ENCODE measurements at regions of chr6 and their contacts with region 1.

Region 1: GRCh38 chr6:27146706-27147505 is 100.6 kb upstream of the PRSS16 start:
- DNase-seq: peak; percentile 91
- H3K4me3 ChIP-seq: peak overlapping the region; percentile 66 to 94
- H3K27ac ChIP-seq: peak overlapping the region; percentile 94 to 96
- H3K4me1 ChIP-seq: peaks cover 0 to 8% of the 10 kb centered on the region in 2 experiments; a peak in 2 of 4 replicates
- H3K27me3 ChIP-seq: no peaks in the 10 kb centered on the region
- CTCF ChIP-seq: no peak
- EP300 ChIP-seq: peak in 1 of 2 experiments; percentile 32; a peak in 1 of 4 replicates
- RAD21 ChIP-seq: no peak

Region 2: GRCh38 chr6:26249957-26250697 is 896.8 kb before region 1 on chr6:
- CTCF ChIA-PET with region 1: no interaction called
- POLR2A ChIA-PET with region 1: interaction called, 11 read pairs
- DNase-seq: peak; percentile 58
- H3K4me3 ChIP-seq: peak overlapping the region; percentile 88 to 92
- H3K27ac ChIP-seq: peak overlapping the region; percentile 85 to 97
- H3K4me1 ChIP-seq: peaks cover 0 to 7% of the 10 kb centered on the region in 2 experiments; a peak in 3 of 4 replicates
- H3K27me3 ChIP-seq: no peaks in the 10 kb centered on the region
- CTCF ChIP-seq: peak; percentile 54
- EP300 ChIP-seq: 0 out of 4 replicates have a peak, but pooled peaks of 1 of the 2 experiments have one; percentile 12
- RAD21 ChIP-seq: no peak; the same call in 1 of the 2 replicates

Region 3: DNA sequence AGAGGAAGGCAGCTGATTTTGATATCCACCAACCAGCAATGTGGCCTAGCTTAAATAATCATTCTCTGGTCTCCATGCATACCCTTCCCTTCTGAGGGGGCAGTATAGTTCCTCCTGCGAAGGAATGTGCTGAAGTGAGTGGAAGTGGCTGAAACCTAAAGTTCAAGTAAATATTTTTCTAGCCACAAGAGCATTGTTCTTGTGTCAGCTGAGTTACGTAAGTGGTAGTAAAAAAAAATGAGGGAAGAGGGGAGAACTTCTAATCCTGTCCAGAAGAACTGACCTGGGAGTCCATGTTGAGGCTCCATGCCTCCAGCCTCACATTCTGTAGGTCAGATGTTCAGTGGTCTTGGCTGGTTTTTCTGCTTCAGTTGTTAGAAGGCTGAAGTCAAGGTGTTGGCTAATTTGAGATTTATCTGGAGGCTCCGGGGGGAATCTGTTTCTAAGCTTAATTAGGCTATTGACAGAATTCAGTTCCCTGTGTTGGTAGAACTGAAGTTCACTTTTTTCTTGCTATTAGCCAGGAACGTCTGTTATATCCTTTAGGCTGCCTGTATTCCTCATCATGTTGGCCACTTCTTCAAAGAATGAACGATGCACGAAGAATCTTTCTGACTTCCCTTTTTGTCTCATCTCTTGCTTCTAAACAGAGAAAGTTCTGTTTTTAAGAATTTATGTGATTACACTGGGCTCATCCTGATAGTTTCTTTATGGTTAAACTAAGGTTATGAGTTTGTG is 106.5 kb before region 1 on chr6:
- CTCF ChIA-PET with region 1: no interaction called
- POLR2A ChIA-PET with region 1: no interaction called
- DNase-seq: no peak
- H3K4me3 ChIP-seq: no peak overlapping the region
- H3K27ac ChIP-seq: no peak overlapping the region
- H3K4me1 ChIP-seq: no peaks in the 10 kb centered on the region
- H3K27me3 ChIP-seq: peaks cover 2% of the 10 kb centered on the region; the same call in 1 of the 2 replicates
- CTCF ChIP-seq: no peak
- EP300 ChIP-seq: no peak
- RAD21 ChIP-seq: no peak

Region 4: DNA sequence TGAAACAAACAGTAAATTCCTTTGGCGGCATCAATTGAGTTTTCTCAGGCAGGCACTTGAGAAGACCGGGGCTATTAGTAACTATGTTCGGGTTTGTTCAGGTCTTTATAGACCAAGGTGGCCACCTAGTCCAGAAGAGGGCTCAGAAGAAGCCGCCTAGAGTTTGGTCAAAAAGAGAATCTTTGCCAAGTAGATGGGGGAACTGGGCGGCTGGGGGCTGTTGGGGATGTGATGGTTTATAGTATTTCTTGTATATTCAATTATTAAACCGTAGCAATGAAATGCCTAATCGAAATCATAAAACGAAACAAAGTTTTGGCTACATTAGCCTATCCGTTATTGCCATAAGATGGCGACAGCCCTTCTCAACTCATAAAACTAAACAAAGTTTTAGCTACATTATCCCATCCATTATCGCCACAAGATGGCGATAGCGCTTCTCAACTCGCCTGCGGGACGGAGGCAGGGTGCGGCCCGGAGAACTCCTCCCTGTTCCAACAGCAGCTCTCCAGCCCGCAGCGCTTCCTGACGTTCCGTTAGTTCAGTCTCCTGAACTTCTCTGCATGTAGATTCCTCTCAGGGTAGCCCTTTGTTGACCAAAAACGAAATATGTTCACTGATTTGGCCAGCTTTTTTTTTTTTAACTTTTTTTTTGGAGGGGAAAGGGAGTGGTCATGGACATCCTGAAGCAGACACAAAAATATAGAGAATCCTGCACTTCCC is 19.9 kb before region 1 on chr6:
- CTCF ChIA-PET with region 1: interaction called, 10 read pairs
- POLR2A ChIA-PET with region 1: interaction called, 158 read pairs
- DNase-seq: peak; percentile 70
- H3K4me3 ChIP-seq: peak overlapping the region; percentile 48 to 57
- H3K27ac ChIP-seq: peak overlapping the region; percentile 65 to 82
- H3K4me1 ChIP-seq: peaks cover 5 to 10% of the 10 kb centered on the region in 2 experiments; a peak in 3 of 4 replicates
- H3K27me3 ChIP-seq: no peaks in the 10 kb centered on the region
- CTCF ChIP-seq: peak; percentile 89
- EP300 ChIP-seq: no peak
- RAD21 ChIP-seq: peak; percentile 78

Region 5: GRCh38 chr6:27157459-27158315 is 10.8 kb after region 1 on chr6:
- CTCF ChIA-PET with region 1: interaction called, 5 read pairs
- POLR2A ChIA-PET with region 1: interaction called, 19 read pairs
- DNase-seq: no peak
- H3K4me3 ChIP-seq: peak overlapping the region; percentile 53 to 57
- H3K27ac ChIP-seq: no peak overlapping the region
- H3K4me1 ChIP-seq: no peaks in the 10 kb centered on the region; a peak in 1 of 4 replicates
- H3K27me3 ChIP-seq: no peaks in the 10 kb centered on the region
- CTCF ChIP-seq: peak; percentile 57
- EP300 ChIP-seq: no peak
- RAD21 ChIP-seq: peak; percentile 42; the same call in 1 of the 2 replicates

Region 6: GRCh38 chr6:27809939-27810767 is 663.2 kb after region 1 on chr6:
- CTCF ChIA-PET with region 1: interaction called, 3 read pairs
- POLR2A ChIA-PET with region 1: interaction called, 111 read pairs
- DNase-seq: peak; percentile 74
- H3K4me3 ChIP-seq: peak overlapping the region; percentile 69 to 83
- H3K27ac ChIP-seq: peak overlapping the region; percentile 80 to 99
- H3K4me1 ChIP-seq: peaks cover 3 to 12% of the 10 kb centered on the region in 2 experiments; a peak in 3 of 4 replicates
- H3K27me3 ChIP-seq: no peaks in the 10 kb centered on the region
- CTCF ChIP-seq: peak; percentile 31
- EP300 ChIP-seq: peak in 1 of 2 experiments; percentile 61; a peak in 1 of 4 replicates
- RAD21 ChIP-seq: no peak

Region 7: GRCh38 chr6:27864906-27865849 is 718.3 kb after region 1 on chr6:
- CTCF ChIA-PET with region 1: no interaction called
- POLR2A ChIA-PET with region 1: interaction called, 11 read pairs
- DNase-seq: peak; percentile 85
- H3K4me3 ChIP-seq: peak overlapping the region; percentile 47 to 80
- H3K27ac ChIP-seq: peak overlapping the region; percentile 80 to 97
- H3K4me1 ChIP-seq: peaks cover 0 to 20% of the 10 kb centered on the region in 2 experiments; a peak in 2 of 4 replicates
- H3K27me3 ChIP-seq: no peaks in the 10 kb centered on the region
- CTCF ChIP-seq: no peak
- EP300 ChIP-seq: no peak; a peak in 1 of 4 replicates
- RAD21 ChIP-seq: no peak

Measured in SK-N-SH (cell line).